Activated T-helper 1 cell treated with anti-CD3 and anti-CD28 coated beads, Interleukin-12 subunit alpha, Interleukin-12 subunit beta, Interleukin-2, Interleukin-4 antibody, amounts not matched to agents 30 ng/mL and 10 ng/mL and 1 ng/mL, durations not matched to agents 14 hours and 24 hours and 36 hours (primary cell): ENCODE measurements at regions of chr11 and their contacts with region 1.

Region 1: GRCh38 chr11:72585762-72586311 is 88.4 kb downstream of the PDE2A start:
- DNase-seq: peak; percentile 63
- H3K4me3 Mint-ChIP-seq: peak overlapping the region; percentile 48
- H3K27ac Mint-ChIP-seq: no peak overlapping the region
- H3K4me1 Mint-ChIP-seq: peaks cover 29% of the 10 kb centered on the region
- H3K27me3 Mint-ChIP-seq: peaks cover 40% of the 10 kb centered on the region

Region 2: GRCh38 chr11:72642884-72643511 is 57.2 kb after region 1 on chr11:
- intact Hi-C with region 1: loop called (anchors 1 kb)
- DNase-seq: peak; percentile 60
- H3K4me3 Mint-ChIP-seq: peak overlapping the region; percentile 62
- H3K27ac Mint-ChIP-seq: no peak overlapping the region
- H3K4me1 Mint-ChIP-seq: no peaks in the 10 kb centered on the region
- H3K27me3 Mint-ChIP-seq: peaks cover 3% of the 10 kb centered on the region

Region 3: GRCh38 chr11:72683782-72684200 is 98.0 kb after region 1 on chr11:
- intact Hi-C with region 1: loop called (anchors 1 kb)
- DNase-seq: peak; percentile 49
- H3K4me3 Mint-ChIP-seq: no peak overlapping the region
- H3K27ac Mint-ChIP-seq: peak overlapping the region; percentile 50
- H3K4me1 Mint-ChIP-seq: peaks cover 43% of the 10 kb centered on the region
- H3K27me3 Mint-ChIP-seq: peaks cover 10% of the 10 kb centered on the region